Breast epithelium (tissue), 4 donors: ENCODE measurements at regions of chr10 and their contacts with region 1.

Region 1: DNA sequence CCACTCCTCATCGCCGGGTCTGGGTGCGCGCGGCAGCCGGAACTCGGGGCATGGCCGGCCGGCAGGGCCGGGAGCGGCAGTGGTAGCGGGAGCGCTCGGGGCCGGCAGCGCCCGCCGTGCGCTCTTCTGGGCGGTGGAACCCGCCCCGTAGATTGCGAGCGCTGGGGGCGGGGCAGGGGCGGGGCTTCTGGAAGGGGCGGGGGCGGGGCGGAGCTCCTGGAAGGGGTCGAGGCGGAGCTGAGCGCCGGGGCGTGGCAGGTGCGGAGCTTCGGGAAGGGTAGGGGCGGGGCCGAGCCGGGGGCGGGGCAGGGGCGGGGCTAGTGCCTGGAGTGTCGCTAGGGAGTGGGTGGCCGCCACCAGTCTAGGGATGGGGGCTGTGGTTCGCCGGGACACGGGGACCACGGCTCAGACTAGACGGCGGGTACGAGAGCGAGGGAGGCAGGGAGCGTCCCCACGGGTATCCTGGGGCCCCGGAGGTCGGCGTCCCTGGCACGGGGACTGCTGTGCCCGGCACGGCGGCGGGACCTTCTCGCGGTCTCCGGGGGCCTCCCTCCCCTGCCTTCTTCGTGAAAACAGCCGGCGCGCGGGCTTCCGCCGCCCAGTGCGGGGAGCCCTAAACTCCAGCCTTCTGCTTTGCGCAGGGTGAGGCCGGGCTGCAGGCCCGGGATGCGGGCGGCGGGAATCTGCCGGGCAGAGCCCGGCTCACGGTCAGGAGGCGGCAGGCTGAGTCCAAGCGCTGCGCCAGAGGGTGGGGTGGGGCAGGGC is at the start of gene STK32C:
- DNase-seq: peak; percentile 84 to 86
- H3K4me3 ChIP-seq: peak within 1 kb of the TSS; percentile 61 to 97 (median 85)
- H3K27ac ChIP-seq: peak within 1 kb of the TSS; percentile 46 to 79
- H3K4me1 ChIP-seq: peaks cover 0 to 4% of the 10 kb centered on the region in 2 donors
- H3K27me3 ChIP-seq: no peaks in the 10 kb centered on the region
- CTCF ChIP-seq: no peak
- POLR2A ChIP-seq: no peak
- total RNA-seq, gene STK32C: 5.6 to 12.8 (median 11.7) TPM

Region 2: GRCh38 chr10:132331526-132332432 is 23.8 kb after region 1 on chr10 and contains the start of gene LRRC27:
- intact Hi-C with region 1: loop called (anchors 1 kb)
- DNase-seq: peak; percentile 96 to 99
- H3K4me3 ChIP-seq: peak within 1 kb of the TSS; percentile 74 to 91 (median 87)
- H3K27ac ChIP-seq: peak within 1 kb of the TSS; percentile 79 to 88
- H3K4me1 ChIP-seq: peaks cover 0 to 6% of the 10 kb centered on the region in 2 donors
- H3K27me3 ChIP-seq: no peaks in the 10 kb centered on the region
- CTCF ChIP-seq: no peak
- POLR2A ChIP-seq: no peak
- total RNA-seq, gene LRRC27: 6.2 to 19.3 (median 8.2) TPM